Ascending aorta (tissue), 2 donors: ENCODE measurements at regions of chr3 and their contacts with region 1.

Region 1: DNA sequence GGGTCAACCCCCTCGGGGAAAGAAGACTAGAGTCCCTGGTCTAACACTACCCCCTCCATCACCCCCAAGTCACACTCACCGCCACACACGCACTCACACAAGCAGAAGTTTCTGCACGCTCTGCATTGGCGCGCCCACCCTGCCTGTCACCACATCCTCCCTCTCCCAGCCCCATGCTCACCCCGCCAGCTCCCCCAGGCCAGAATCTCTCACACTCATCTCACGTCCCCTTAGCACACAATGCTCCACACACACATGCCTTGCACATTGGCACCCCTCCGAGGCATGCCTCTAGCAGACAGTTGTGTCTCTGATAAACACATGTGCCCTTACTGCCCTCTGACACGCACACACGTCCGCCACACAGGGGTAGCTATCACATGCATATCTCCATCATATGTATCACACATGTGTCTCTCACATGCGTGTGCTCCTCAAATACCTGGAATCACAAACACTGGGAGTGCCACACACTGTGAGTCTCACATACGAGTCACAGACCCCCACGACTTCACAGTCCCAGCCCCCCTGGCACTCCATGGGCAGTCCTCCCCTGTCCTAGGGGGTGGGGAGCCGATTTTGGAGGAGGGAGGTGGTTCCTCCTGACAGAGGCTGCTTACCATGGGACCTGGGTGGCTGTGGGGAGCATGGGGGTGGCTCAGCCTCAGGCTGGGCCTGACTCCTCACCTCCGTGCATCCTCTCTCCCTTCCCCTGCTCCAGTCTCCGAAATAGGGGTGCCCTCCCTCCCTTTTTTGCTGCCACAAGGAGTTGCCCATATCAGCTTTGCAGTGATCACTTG is 898 bp downstream of the FBLN2 start:
- DNase-seq: peak in 1 of 2 donors; percentile 61
- H3K4me3 ChIP-seq: peak overlapping the region; percentile 47 to 61
- H3K27ac ChIP-seq: peak overlapping the region; percentile 45 to 61
- H3K4me1 ChIP-seq: peaks cover 0 to 16% of the 10 kb centered on the region in 2 donors
- H3K27me3 ChIP-seq: no peaks in the 10 kb centered on the region
- CTCF ChIP-seq: no peak

Region 2: GRCh38 chr3:13495921-13496723 is 53.7 kb before region 1 on chr3:
- intact Hi-C with region 1: loop called (anchors 5 kb)
- DNase-seq: peak in 1 of 2 donors; percentile 89
- H3K4me3 ChIP-seq: no peak overlapping the region
- H3K27ac ChIP-seq: no peak overlapping the region
- H3K4me1 ChIP-seq: no peaks in the 10 kb centered on the region
- H3K27me3 ChIP-seq: no peaks in the 10 kb centered on the region
- CTCF ChIP-seq: peak; percentile 86 to 96 (median 89)